ENCODE measurements at regions of chrX and their contacts with region 1.

Region 1: DNA sequence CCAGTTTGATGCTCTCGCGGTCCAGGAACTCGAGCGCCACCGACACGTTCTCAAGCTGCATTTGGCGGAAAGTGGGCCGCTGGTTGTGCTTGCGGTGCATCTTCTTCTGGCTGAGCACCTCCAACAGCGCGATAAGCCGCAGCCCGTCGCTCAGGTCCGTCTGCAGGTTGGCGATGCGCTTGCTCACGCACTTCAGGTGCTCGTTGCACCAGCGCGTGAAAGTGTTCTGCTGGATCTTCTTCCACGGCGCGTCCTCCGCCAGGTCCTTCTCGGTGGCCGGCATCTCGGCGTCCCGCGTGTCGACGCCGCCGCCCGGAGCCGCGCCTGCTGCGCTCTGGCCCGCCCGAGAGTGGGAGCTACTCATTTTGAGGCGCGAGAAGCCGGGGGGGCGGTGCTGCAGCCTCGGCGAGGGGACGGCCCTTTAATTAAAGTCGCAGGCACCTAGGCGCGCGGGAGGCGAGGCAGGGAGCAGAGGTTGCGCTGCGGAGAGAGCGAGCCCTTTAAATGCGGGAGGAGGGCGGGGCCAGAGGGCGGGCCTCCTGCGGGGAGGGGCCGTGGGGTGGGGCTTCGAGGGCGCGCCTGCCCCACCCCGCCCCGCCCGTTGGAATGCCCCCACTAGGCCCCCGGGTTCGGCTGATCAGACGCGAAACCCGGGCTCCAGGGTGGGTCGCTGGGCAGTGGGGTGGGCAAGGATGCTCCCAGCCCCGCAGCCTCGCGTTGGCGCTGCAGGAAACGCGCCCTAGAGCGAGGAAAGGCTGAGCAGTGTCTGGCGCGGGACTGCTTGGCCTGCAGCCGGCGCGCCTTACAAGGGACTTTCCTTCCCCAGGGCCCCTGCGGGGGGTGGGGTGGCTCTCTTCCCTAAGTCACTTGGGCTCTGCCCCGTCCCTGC is 3.3 kb downstream of the FLNA start:
- DNase-seq: peak; percentile 80 to 96 (median 88)
- ATAC-seq: peak; percentile 61 to 71
- H3K4me3 Mint-ChIP-seq: peak overlapping the region; percentile 78 to 96 (median 85)
- H3K27ac Mint-ChIP-seq: peak overlapping the region in 9 of 10 donors; percentile 25 to 92 (median 77)
- H3K4me1 Mint-ChIP-seq: peaks cover 4 to 30% (median 22%) of the 10 kb centered on the region in 4 donors
- H3K27me3 Mint-ChIP-seq: no peaks in the 10 kb centered on the region

Region 2: GRCh38 chrX:154327038-154327820 is 43.9 kb before region 1 on chrX:
- POLR2A ChIA-PET with region 1: interaction called, 14 read pairs
- DNase-seq: peak in 9 of 10 donors; percentile 40 to 78 (median 56)
- ATAC-seq: peak; percentile 95 to 96
- H3K4me3 Mint-ChIP-seq: peak overlapping the region; percentile 70 to 85 (median 79)
- H3K27ac Mint-ChIP-seq: peak overlapping the region; percentile 66 to 95 (median 90)
- H3K4me1 Mint-ChIP-seq: peaks cover 19 to 59% (median 48%) of the 10 kb centered on the region in 4 donors
- H3K27me3 Mint-ChIP-seq: no peaks in the 10 kb centered on the region

Region 3: GRCh38 chrX:154348114-154348531 is 23.0 kb before region 1 on chrX:
- POLR2A ChIA-PET with region 1: interaction called, 101 read pairs
- DNase-seq: no peak
- ATAC-seq: no peak
- H3K4me3 Mint-ChIP-seq: peak overlapping the region in 6 of 10 donors; percentile 18 to 51 (median 23)
- H3K27ac Mint-ChIP-seq: peak overlapping the region; percentile 46 to 97 (median 92)
- H3K4me1 Mint-ChIP-seq: peaks cover 6 to 50% (median 43%) of the 10 kb centered on the region in 4 donors
- H3K27me3 Mint-ChIP-seq: no peaks in the 10 kb centered on the region

Region 4: DNA sequence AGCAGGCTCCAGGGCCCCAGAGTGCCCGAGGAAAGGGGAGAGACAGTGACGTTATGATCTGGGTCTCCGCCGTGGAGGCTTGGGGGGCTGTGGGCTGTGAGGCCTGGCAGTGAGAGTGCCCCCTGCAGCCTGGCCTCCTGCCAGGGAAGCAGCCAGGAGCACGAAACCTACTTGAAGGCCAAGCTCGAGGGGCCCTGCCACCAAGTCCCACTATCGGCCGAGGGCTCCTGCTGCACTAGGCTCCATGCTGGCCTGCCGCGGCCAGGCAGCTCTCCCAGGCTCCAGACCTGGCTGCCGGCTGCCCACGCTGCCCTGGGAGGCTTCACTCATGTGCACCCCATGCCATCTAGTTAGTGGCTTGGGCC is 15.4 kb before region 1 on chrX:
- POLR2A ChIA-PET with region 1: interaction called, 101 read pairs
- DNase-seq: peak in 1 of 10 donors; percentile 21
- ATAC-seq: no peak
- H3K4me3 Mint-ChIP-seq: no peak overlapping the region
- H3K27ac Mint-ChIP-seq: peak overlapping the region in 3 of 10 donors; percentile 34 to 79 (median 43)
- H3K4me1 Mint-ChIP-seq: peaks cover 5 to 54% (median 31%) of the 10 kb centered on the region in 4 donors
- H3K27me3 Mint-ChIP-seq: no peaks in the 10 kb centered on the region

Region 5: GRCh38 chrX:154436983-154437719 is 66.0 kb after region 1 on chrX and contains the start of gene GDI1:
- POLR2A ChIA-PET with region 1: no interaction called
- DNase-seq: peak; percentile 23 to 78 (median 57)
- ATAC-seq: peak; percentile 60 to 72
- H3K4me3 Mint-ChIP-seq: peak within 1 kb of the TSS; percentile 78 to 91 (median 82)
- H3K27ac Mint-ChIP-seq: peak within 1 kb of the TSS; percentile 81 to 96 (median 90)
- H3K4me1 Mint-ChIP-seq: peaks cover 4 to 33% (median 28%) of the 10 kb centered on the region in 4 donors
- H3K27me3 Mint-ChIP-seq: no peaks in the 10 kb centered on the region
- polyA plus RNA-seq, gene GDI1: 18.3 to 32.1 (median 21.0) TPM